Activated naive CD8-positive, alpha-beta T cell treated with anti-CD3 and anti-CD28 coated beads, Interleukin-2, amount 10 ng/mL, durations not matched to agents 7 days and 5 days (primary cell): ENCODE measurements at regions of chr1 and their contacts with region 1.

Region 1: GRCh38 chr1:34984793-34985608 is at the start of gene TMEM35B:
- DNase-seq: peak; percentile 83
- ATAC-seq: peak; percentile 93
- H3K4me3 Mint-ChIP-seq: peak within 1 kb of the TSS; percentile 99
- H3K27ac Mint-ChIP-seq: peak within 1 kb of the TSS; percentile 91
- H3K4me1 Mint-ChIP-seq: peaks cover 23% of the 10 kb centered on the region
- H3K27me3 Mint-ChIP-seq: no peaks in the 10 kb centered on the region
- total RNA-seq, gene TMEM35B: 38.0 to 39.9 TPM

Region 2: GRCh38 chr1:34859446-34860200 is 125.4 kb before region 1 on chr1 and contains the start of gene SMIM12:
- POLR2A ChIA-PET with region 1: interaction called, 12 read pairs
- DNase-seq: peak; percentile 85
- ATAC-seq: peak; percentile 91
- H3K4me3 Mint-ChIP-seq: peak within 1 kb of the TSS; percentile 97
- H3K27ac Mint-ChIP-seq: peak within 1 kb of the TSS; percentile 94
- H3K4me1 Mint-ChIP-seq: peaks cover 57% of the 10 kb centered on the region
- H3K27me3 Mint-ChIP-seq: no peaks in the 10 kb centered on the region
- total RNA-seq, gene SMIM12: 51.9 to 53.0 TPM

Region 3: GRCh38 chr1:35030756-35031446 is 45.9 kb after region 1 on chr1:
- POLR2A ChIA-PET with region 1: interaction called, 18 read pairs
- DNase-seq: peak; percentile 47
- ATAC-seq: peak; percentile 29
- H3K4me3 Mint-ChIP-seq: peak overlapping the region; percentile 99
- H3K27ac Mint-ChIP-seq: peak overlapping the region; percentile 90
- H3K4me1 Mint-ChIP-seq: peaks cover 14% of the 10 kb centered on the region
- H3K27me3 Mint-ChIP-seq: no peaks in the 10 kb centered on the region